Heart left ventricle (tissue), 16 donors: ENCODE measurements at regions of chr18 and their contacts with region 1.

Region 1: DNA sequence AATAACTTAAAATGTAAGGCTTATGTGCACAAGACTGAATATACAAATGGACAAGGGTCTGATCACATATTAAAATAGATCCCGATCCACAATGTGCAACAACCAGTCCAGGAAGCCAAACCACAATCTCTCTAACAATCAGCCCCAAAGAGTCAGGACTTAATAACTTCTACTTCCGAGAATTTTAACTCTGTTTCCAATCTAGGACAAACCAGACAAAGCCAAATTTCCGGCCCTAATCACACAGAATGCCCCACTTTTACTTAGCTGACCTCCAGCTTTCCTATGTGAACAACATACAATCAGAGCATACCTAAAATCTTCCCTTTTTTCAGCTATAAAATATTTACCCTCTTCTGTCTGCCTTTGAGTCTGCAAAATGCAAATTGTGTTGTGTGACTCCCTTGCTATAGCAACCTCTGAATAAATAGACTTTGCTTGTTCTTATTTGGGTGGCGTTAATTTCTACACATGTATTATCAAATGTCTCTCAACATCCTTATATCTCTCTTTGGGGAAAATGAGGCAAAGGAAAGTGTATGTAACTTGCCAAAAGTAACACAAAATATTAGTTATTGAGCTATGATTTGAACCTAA is 381.9 kb upstream of the MC4R start:
- DNase-seq: no peak
- ATAC-seq: peak in 3 of 4 donors; percentile 38 to 66 (median 57)
- H3K4me3 ChIP-seq: no peak overlapping the region
- H3K27ac ChIP-seq: peak overlapping the region in 6 of 12 donors; percentile 19 to 49 (median 34)
- H3K4me1 ChIP-seq: peaks cover 0 to 7% (median 0%) of the 10 kb centered on the region in 12 donors
- H3K27me3 ChIP-seq: no peaks in the 10 kb centered on the region
- CTCF ChIP-seq: no peak
- POLR2A ChIP-seq: no peak

Region 2: DNA sequence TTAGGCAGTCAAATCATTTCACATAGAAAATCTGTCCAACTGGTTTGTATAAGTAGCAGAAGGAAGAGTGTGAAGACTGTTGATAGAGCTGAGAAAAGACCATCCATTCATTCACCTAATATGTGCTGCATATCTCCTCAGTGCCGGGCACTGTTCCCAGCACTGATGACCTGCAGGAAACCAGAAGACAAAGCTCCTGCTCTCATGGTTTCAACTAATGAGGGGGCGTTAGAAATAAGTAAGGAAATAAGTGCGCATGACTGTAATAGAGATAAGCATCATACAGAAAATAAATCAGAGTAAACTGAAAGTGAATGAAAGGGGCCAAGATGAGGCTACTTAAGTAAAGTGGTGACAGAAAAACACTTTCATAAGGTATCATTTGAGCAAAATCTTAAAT is 151.2 kb after region 1 on chr18:
- intact Hi-C with region 1: loop called in 1 of 10 experiments (anchors 5 kb)
- DNase-seq: peak in 3 of 5 donors; percentile 9 to 38 (median 26)
- ATAC-seq: peak in 3 of 4 donors; percentile 18 to 96 (median 38)
- H3K4me3 ChIP-seq: no peak overlapping the region
- H3K27ac ChIP-seq: no peak overlapping the region
- H3K4me1 ChIP-seq: peaks cover 0 to 3% (median 0%) of the 10 kb centered on the region in 12 donors
- H3K27me3 ChIP-seq: no peaks in the 10 kb centered on the region
- CTCF ChIP-seq: no peak
- POLR2A ChIP-seq: no peak